Heart right ventricle (tissue), 16 donors: ENCODE measurements at regions of chr2 and their contacts with region 1.

Region 1: DNA sequence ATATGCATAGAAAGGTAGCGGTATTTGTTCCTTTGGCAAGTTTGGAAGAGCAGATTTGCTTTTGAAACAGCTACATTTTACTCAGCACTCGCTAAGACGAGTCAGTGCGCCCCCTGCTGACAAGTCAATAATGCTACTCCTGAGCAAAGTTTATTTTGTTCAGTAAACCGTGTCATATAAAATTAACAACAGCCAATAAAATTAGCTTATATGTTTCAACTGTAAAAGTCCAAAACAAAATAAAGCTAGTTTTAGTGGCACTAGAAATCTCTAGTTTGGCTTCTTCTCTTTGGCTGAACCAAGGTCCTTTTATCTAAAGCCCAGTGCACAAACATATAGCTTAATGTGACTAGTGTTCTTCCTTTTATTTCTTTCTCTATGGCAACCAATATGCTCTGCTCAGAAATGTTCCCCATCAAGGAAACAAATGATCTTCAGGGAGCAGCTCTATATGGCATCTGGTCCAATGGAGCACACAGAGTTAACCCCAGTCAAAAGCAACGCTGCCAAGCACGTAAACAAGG is 4.2 kb upstream of the POU3F3 start:
- DNase-seq: peak; percentile 39 to 67
- ATAC-seq: no peak
- H3K4me3 ChIP-seq: no peak overlapping the region
- H3K27ac ChIP-seq: no peak overlapping the region
- H3K4me1 ChIP-seq: peaks cover 2 to 40% (median 30%) of the 10 kb centered on the region in 9 donors
- H3K27me3 ChIP-seq: peaks cover 31 to 99% (median 98%) of the 10 kb centered on the region in 7 donors
- CTCF ChIP-seq: peak; percentile 54 to 86 (median 77)

Region 2: DNA sequence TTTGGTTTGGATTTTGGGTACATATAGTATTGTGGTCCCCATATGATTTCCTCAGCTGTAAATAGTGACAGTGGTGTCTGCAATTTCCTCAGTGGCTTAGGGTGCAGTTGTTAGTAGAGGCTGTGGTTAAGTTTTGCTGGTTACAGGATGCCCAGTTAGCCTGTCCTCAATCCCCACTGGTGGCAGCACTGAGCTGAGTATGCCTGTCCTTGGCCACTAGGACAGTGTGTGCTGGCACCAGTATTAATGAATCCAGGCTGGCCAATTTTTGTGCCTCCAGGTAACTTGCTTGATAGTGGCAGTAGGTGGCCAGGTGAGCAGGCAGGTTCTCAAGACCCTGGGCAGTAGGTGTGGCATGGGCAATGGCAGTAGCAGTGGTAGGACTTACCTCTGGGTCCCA is 1114.8 kb before region 1 on chr2:
- intact Hi-C with region 1: no loop called
- DNase-seq: no peak
- ATAC-seq: no peak
- H3K4me3 ChIP-seq: no peak overlapping the region
- H3K27ac ChIP-seq: no peak overlapping the region
- H3K4me1 ChIP-seq: no peaks in the 10 kb centered on the region
- H3K27me3 ChIP-seq: no peaks in the 10 kb centered on the region
- CTCF ChIP-seq: no peak

Region 3: DNA sequence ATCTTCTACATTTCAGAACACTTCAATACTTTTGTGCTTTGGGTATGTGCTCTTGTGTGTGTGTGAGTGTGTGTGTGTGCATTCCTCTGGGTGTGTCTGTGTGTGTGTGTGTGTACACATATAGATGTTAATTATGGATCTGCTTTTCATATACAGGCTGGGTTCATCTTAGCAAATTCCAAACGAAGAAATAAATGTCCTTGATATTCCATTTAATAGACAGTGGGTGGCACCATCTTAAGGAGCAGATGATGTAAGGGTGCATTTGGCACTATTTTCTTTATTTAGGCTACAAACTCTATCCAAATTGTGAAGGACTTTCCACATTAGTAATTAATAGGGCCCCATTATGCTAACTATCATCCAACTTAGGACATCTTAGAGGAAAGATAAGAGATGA is 421.5 kb before region 1 on chr2:
- intact Hi-C with region 1: loop called in 1 of 10 experiments (anchors 5 kb)
- DNase-seq: no peak
- ATAC-seq: no peak
- H3K4me3 ChIP-seq: no peak overlapping the region
- H3K27ac ChIP-seq: no peak overlapping the region
- H3K4me1 ChIP-seq: no peaks in the 10 kb centered on the region
- H3K27me3 ChIP-seq: peaks cover 0 to 24% (median 0%) of the 10 kb centered on the region in 7 donors
- CTCF ChIP-seq: no peak